Activated T-helper 1 cell treated with anti-CD3 and anti-CD28 coated beads, Interleukin-12 subunit alpha, Interleukin-12 subunit beta, Interleukin-2, Interleukin-4 antibody, amounts not matched to agents 30 ng/mL and 10 ng/mL and 1 ng/mL, durations not matched to agents 14 hours and 24 hours and 36 hours (primary cell): ENCODE measurements at regions of chr17 and their contacts with region 1.

Region 1: DNA sequence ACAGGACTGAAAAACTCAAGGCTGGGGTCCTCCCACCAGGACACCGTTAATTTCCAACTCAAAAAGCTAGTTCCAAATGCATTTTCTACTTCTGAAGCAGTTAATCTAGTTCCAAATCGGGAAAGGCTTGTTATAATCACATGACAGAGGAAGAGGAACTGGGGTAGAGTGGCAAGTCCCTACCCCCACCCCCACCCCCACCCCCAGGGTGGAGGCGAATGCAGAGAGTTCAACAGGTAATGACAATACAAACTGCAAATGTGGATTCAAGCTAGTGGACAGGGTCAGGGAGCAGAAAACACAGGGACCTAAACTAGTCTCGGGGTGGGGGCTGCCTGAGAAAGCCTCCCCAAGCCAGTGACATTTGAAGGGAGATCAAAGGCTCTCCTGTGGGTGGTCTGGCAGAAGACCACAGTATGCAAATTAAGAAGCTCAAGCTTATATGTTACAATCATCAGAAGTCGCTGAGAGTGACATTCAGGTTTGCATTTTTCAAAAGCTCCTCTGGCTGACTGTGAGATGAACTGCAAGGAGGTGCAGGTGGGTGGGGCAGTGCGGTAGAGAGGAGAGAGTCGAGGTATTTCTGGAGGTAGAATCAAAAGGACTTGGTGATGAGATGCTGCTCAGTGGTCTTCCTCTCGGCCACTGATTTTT is 56.4 kb upstream of the SLC25A19 start:
- DNase-seq: peak; percentile 30
- H3K4me3 Mint-ChIP-seq: peak overlapping the region; percentile 75
- H3K27ac Mint-ChIP-seq: peak overlapping the region; percentile 86
- H3K4me1 Mint-ChIP-seq: peaks cover 85% of the 10 kb centered on the region
- H3K27me3 Mint-ChIP-seq: no peaks in the 10 kb centered on the region

Region 2: GRCh38 chr17:75182569-75183450 is 162.8 kb before region 1 on chr17 and contains the start of gene SUMO2:
- intact Hi-C with region 1: no loop called
- DNase-seq: peak; percentile 93
- H3K4me3 Mint-ChIP-seq: peak within 1 kb of the TSS; percentile 99
- H3K27ac Mint-ChIP-seq: peak within 1 kb of the TSS; percentile 98
- H3K4me1 Mint-ChIP-seq: peaks cover 38% of the 10 kb centered on the region
- H3K27me3 Mint-ChIP-seq: no peaks in the 10 kb centered on the region
- total RNA-seq, gene SUMO2: 649 and 656 TPM in 2 replicates

Region 3: GRCh38 chr17:75331671-75332070 is 14.0 kb before region 1 on chr17:
- intact Hi-C with region 1: loop called (anchors 2 kb)
- DNase-seq: no peak
- H3K4me3 Mint-ChIP-seq: no peak overlapping the region
- H3K27ac Mint-ChIP-seq: no peak overlapping the region
- H3K4me1 Mint-ChIP-seq: peaks cover 62% of the 10 kb centered on the region
- H3K27me3 Mint-ChIP-seq: no peaks in the 10 kb centered on the region

Region 4: DNA sequence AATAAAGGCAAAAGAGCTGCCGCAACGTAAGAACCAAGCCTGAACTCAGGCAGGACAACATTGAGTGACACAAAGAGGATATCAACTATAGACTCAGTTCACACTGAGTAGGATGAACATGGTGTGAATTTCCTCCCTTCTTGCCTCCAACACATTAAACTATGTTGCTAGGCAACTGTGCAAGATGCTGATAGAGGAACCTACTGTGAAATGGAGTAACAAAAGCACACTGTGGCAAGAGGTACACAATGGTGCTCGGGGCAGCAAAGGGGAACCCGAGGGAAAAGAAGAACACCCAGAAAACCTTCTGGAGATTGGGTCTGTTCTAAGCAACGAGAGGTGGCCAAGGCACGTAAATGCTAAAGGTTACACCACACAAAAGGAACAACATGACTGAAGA is 25.7 kb after region 1 on chr17:
- intact Hi-C with region 1: loop called (anchors 2 kb)
- DNase-seq: no peak
- H3K4me3 Mint-ChIP-seq: peak overlapping the region; percentile 65
- H3K27ac Mint-ChIP-seq: peak overlapping the region; percentile 92
- H3K4me1 Mint-ChIP-seq: peaks cover 60% of the 10 kb centered on the region
- H3K27me3 Mint-ChIP-seq: no peaks in the 10 kb centered on the region

Region 5: GRCh38 chr17:75393523-75394331 is 48.1 kb after region 1 on chr17:
- intact Hi-C with region 1: loop called (anchors 1 kb)
- DNase-seq: peak; percentile 76
- H3K4me3 Mint-ChIP-seq: peak overlapping the region; percentile 86
- H3K27ac Mint-ChIP-seq: peak overlapping the region; percentile 78
- H3K4me1 Mint-ChIP-seq: peaks cover 76% of the 10 kb centered on the region
- H3K27me3 Mint-ChIP-seq: no peaks in the 10 kb centered on the region